ENCODE measurements at regions of chr19 and their contacts with region 1.

Region 1: GRCh38 chr19:19342756-19343322 is 22.2 kb downstream of the MAU2 start:
- DNase-seq: no peak
- H3K4me3 ChIP-seq: no peak overlapping the region
- H3K27me3 ChIP-seq: no peaks in the 10 kb centered on the region
- CTCF ChIP-seq: peak; percentile 94

Region 2: DNA sequence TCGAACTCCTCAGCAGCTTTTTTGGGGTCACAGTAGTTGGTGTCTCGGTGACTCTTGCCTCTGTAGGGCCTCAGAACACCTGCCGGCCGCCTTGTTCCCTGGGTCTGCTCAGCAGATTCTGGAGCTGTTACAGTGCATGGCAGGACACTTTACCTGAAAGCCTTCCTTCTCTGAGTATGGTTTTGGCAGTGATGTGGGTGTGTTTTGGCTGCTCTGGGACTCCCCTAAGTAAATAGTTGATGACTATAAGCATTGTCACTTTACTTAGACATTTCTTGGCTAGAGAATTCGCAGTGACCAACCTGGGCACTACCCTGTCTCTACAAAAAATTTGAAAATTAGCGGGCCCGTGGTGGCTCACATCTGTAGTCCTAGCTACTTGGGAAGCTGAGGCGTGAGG is 15.2 kb before region 1 on chr19:
- CTCF ChIA-PET with region 1: interaction called, 11 read pairs
- POLR2A ChIA-PET with region 1: no interaction called
- DNase-seq: no peak
- H3K4me3 ChIP-seq: no peak overlapping the region
- H3K27me3 ChIP-seq: no peaks in the 10 kb centered on the region
- CTCF ChIP-seq: no peak

Region 3: GRCh38 chr19:19361075-19361594 is 18.3 kb after region 1 on chr19:
- CTCF ChIA-PET with region 1: interaction called, 21 read pairs
- POLR2A ChIA-PET with region 1: no interaction called
- DNase-seq: peak; percentile 37
- H3K4me3 ChIP-seq: no peak overlapping the region
- H3K27me3 ChIP-seq: no peaks in the 10 kb centered on the region
- CTCF ChIP-seq: peak; percentile 81

Measured in BJ (cell line).